BJ (cell line): ENCODE measurements at regions of chr21 and their contacts with region 1.

Region 1: DNA sequence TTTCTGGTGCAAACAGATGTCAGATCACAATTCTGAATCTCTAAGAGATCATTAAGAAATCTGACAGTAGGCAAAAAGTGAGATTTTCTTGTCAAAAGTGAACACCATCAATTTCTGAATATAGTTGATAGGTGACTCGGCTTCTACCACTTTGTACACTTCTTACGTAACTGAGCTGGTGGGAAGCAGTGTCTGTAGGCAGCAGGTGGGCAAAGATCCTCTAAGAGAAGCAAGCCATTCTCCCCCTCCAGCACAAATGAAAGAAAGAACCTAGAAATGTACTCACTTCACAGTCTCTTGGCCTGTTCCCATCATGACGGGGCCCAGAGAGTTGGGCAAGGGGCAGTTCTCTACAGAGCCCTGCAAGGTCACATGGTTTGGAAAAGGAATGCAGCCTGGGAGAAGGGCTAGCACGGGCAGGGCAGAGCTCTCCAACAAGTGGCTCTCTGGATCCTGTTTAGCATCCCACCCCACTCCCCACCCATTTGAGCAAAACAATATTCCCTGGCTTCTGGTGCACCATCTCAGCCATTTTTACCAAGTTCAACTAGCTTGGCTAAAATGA is 412.6 kb downstream of the LTN1 start:
- DNase-seq: no peak
- H3K4me3 ChIP-seq: no peak overlapping the region
- H3K27me3 ChIP-seq: no peaks in the 10 kb centered on the region
- CTCF ChIP-seq: no peak

Region 2: DNA sequence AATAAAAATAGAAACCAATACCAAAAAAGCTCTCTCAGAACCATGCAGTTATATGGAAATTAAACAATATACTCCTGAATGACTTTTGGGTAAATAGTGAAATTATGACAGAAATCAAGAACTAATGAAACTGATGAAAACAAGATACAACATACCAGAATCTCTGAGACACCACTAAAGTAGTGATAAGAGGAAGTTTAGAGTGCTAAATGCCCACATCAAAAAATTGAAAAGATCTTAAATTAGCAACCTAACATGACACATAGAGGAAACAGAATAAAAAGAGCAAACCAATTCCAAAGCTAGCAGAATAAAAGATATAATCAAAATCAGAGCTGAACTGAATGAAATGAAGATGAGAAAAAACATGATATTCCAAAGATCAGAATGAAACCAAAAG is 18.3 kb before region 1 on chr21:
- CTCF ChIA-PET with region 1: no interaction called
- POLR2A ChIA-PET with region 1: no interaction called
- DNase-seq: no peak
- H3K4me3 ChIP-seq: no peak overlapping the region
- H3K27me3 ChIP-seq: no peaks in the 10 kb centered on the region
- CTCF ChIP-seq: no peak

Region 3: GRCh38 chr21:28602546-28602945 is 22.5 kb after region 1 on chr21:
- CTCF ChIA-PET with region 1: no interaction called
- POLR2A ChIA-PET with region 1: no interaction called
- DNase-seq: no peak
- H3K4me3 ChIP-seq: no peak overlapping the region
- H3K27me3 ChIP-seq: no peaks in the 10 kb centered on the region
- CTCF ChIP-seq: no peak

Region 4: GRCh38 chr21:28725396-28725795 is 145.3 kb after region 1 on chr21:
- CTCF ChIA-PET with region 1: no interaction called
- POLR2A ChIA-PET with region 1: interaction called, 27 read pairs
- DNase-seq: no peak
- H3K4me3 ChIP-seq: no peak overlapping the region
- H3K27me3 ChIP-seq: no peaks in the 10 kb centered on the region
- CTCF ChIP-seq: no peak